ENCODE measurements at regions of chr5 and their contacts with region 1.

Region 1: GRCh38 chr5:172707285-172708182 is 63.5 kb downstream of the DUSP1 start:
- DNase-seq: peak; percentile 77
- ATAC-seq: peak; percentile 99
- H3K4me3 ChIP-seq: peak overlapping the region; percentile 25; the same call in 1 of the 2 replicates
- H3K27ac ChIP-seq: no peak overlapping the region
- H3K4me1 ChIP-seq: peaks cover 4% of the 10 kb centered on the region; the same call in 1 of the 2 replicates
- H3K27me3 ChIP-seq: no peaks in the 10 kb centered on the region
- CTCF ChIP-seq: peak; percentile 88

Region 2: GRCh38 chr5:172939071-172939470 is 231.5 kb after region 1 on chr5:
- CTCF ChIA-PET with region 1: interaction called, 12 read pairs
- POLR2A ChIA-PET with region 1: no interaction called
- intact Hi-C with region 1: no loop called
- DNase-seq: peak; percentile 27
- ATAC-seq: peak; percentile 50; the same call in 1 of the 2 replicates
- H3K4me3 ChIP-seq: no peak overlapping the region
- H3K27ac ChIP-seq: no peak overlapping the region
- H3K4me1 ChIP-seq: no peaks in the 10 kb centered on the region
- H3K27me3 ChIP-seq: no peaks in the 10 kb centered on the region
- CTCF ChIP-seq: peak; percentile 68

Region 3: DNA sequence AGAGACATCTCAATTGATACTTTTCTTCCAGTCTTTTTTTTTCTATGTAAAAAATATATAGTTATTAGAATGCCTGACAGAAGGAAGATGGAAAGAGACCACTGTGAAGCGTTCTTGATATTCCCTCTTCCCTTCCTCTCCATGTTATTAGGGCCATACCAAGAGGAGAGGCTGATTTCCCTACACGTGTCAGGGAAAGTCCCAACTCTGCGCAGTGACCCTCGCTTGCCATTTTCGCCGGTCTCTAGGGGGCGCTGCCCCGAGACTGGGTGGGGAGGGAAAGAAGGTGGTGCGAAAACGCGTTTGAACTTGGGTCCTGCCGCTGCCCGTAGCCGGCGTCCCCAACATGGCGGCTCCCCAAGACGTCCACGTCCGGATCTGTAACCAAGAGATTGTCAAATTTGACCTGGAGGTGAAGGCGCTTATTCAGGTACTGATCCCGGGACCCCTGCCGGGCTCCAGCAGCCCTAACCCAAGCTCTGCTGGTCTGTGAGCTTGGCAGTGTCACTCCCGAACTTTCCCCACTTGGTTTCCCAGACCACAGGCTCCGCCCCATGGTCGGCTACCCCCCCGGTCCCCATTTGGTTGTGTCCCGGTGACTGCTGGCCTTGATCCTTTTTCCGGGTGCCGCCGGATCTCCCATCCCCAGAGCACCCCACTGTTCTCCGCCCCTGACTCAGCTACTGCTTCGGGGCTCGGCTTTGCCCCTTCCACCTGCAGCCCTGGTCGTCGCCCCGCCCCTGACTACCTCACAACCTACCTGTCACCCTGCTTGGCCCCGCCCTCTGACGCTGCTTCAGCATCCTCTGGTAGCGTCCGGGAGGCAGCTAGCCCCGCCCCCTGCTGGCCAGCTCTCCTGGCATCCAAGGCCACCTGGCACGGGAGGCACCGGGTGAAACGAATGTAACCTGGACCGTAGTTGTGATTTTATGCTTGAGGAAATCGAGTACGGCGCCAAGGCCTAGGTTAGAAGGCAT is 437.0 kb after region 1 on chr5 and contains the start of gene BNIP1:
- CTCF ChIA-PET with region 1: interaction called, 6 read pairs
- POLR2A ChIA-PET with region 1: no interaction called
- intact Hi-C with region 1: loop called (anchors 10 kb)
- DNase-seq: peak; percentile 97
- ATAC-seq: peak; percentile 97
- H3K4me3 ChIP-seq: peak within 1 kb of the TSS; percentile 88
- H3K27ac ChIP-seq: peak within 1 kb of the TSS; percentile 82
- H3K4me1 ChIP-seq: no peaks in the 10 kb centered on the region; the same call in 1 of the 2 replicates
- H3K27me3 ChIP-seq: no peaks in the 10 kb centered on the region
- CTCF ChIP-seq: peak; percentile 79
- total RNA-seq, gene BNIP1: 17.0 and 21.5 TPM in 2 replicates

Region 4: GRCh38 chr5:173615884-173616576 is 908.5 kb after region 1 on chr5:
- CTCF ChIA-PET with region 1: no interaction called
- POLR2A ChIA-PET with region 1: no interaction called
- intact Hi-C with region 1: loop called (anchors 5 kb)
- DNase-seq: peak; percentile 79
- ATAC-seq: peak; percentile 62
- H3K4me3 ChIP-seq: peak overlapping the region; percentile 90
- H3K27ac ChIP-seq: peak overlapping the region; percentile 71
- H3K4me1 ChIP-seq: peaks cover 36% of the 10 kb centered on the region
- H3K27me3 ChIP-seq: no peaks in the 10 kb centered on the region
- CTCF ChIP-seq: peak; percentile 81

Measured in PC-3 (cell line).